ENCODE measurements at regions of chr9 and their contacts with region 1.

Region 1: GRCh38 chr9:32378993-32379729 is 5.3 kb upstream of the ACO1 start:
- DNase-seq: peak; percentile 81
- ATAC-seq: peak; percentile 74
- H3K4me3 ChIP-seq: no peak overlapping the region; the same call in 1 of the 2 replicates
- H3K27ac ChIP-seq: no peak overlapping the region
- H3K4me1 ChIP-seq: 0 out of 2 replicates have a peak, but pooled peaks cover 4% of the 10 kb centered on the region
- H3K27me3 ChIP-seq: no peaks in the 10 kb centered on the region
- CTCF ChIP-seq: peak; percentile 80

Region 2: GRCh38 chr9:32431940-32432555 is 52.9 kb after region 1 on chr9:
- CTCF ChIA-PET with region 1: interaction called, 7 read pairs
- POLR2A ChIA-PET with region 1: no interaction called
- intact Hi-C with region 1: loop called (anchors 1 kb)
- DNase-seq: peak; percentile 36
- ATAC-seq: peak; percentile 82
- H3K4me3 ChIP-seq: no peak overlapping the region
- H3K27ac ChIP-seq: no peak overlapping the region
- H3K4me1 ChIP-seq: peaks cover 25% of the 10 kb centered on the region
- H3K27me3 ChIP-seq: no peaks in the 10 kb centered on the region
- CTCF ChIP-seq: peak; percentile 63

Region 3: DNA sequence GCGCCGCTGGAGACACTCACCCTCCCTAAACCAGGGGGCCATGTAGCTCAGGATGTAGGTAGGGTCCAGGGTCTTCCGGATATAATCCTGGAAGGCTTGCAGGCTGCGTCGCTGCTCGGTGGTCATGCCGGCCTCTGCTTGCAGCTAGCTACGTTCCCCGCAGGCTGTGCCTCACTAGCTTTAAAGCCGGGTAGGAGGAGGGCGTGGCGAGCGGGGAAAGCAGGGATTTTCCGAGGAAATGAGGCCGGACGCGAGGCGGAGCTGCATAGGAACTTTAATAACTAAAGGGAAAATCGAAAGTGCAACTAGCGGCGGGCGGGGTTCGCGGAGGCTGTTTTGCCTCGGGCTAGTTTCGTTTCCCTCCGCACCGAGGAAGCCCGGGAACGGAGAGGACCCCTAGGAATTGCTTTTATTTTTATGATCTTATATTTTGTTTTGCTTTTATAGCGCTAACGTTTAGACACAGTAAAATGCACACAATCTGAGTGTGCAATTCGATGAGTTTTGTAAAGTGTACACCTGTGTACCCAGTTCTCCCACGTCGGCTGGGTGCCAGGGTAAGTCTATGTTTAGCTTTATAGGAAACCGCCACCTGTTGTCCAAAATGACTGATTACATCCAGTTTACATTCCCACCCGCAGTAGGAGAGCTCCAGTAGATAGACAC is 147.0 kb after region 1 on chr9 and contains the start of gene RIGI:
- CTCF ChIA-PET with region 1: interaction called, 16 read pairs
- POLR2A ChIA-PET with region 1: interaction called, 12 read pairs
- intact Hi-C with region 1: loop called (anchors 2 kb)
- DNase-seq: peak; percentile 87
- ATAC-seq: peak; percentile 88
- H3K4me3 ChIP-seq: peak within 1 kb of the TSS; percentile 92
- H3K27ac ChIP-seq: peak within 1 kb of the TSS; percentile 78
- H3K4me1 ChIP-seq: peaks cover 7% of the 10 kb centered on the region; the same call in 1 of the 2 replicates
- H3K27me3 ChIP-seq: no peaks in the 10 kb centered on the region
- CTCF ChIP-seq: peak; percentile 63
- total RNA-seq, gene RIGI: 2.6 and 5.4 TPM in 2 replicates

Region 4: GRCh38 chr9:32571969-32572899 is 193.1 kb after region 1 on chr9:
- CTCF ChIA-PET with region 1: interaction called, 16 read pairs
- POLR2A ChIA-PET with region 1: no interaction called
- intact Hi-C with region 1: loop called (anchors 1 kb)
- DNase-seq: peak; percentile 70
- ATAC-seq: peak; percentile 92
- H3K4me3 ChIP-seq: peak overlapping the region; percentile 97
- H3K27ac ChIP-seq: peak overlapping the region; percentile 55
- H3K4me1 ChIP-seq: peaks cover 17% of the 10 kb centered on the region
- H3K27me3 ChIP-seq: no peaks in the 10 kb centered on the region
- CTCF ChIP-seq: peak; percentile 77

Region 5: GRCh38 chr9:32579706-32580331 is 200.7 kb after region 1 on chr9:
- CTCF ChIA-PET with region 1: interaction called, 22 read pairs
- POLR2A ChIA-PET with region 1: no interaction called
- intact Hi-C with region 1: loop called (anchors 1 kb)
- DNase-seq: peak; percentile 67
- ATAC-seq: no peak
- H3K4me3 ChIP-seq: no peak overlapping the region
- H3K27ac ChIP-seq: no peak overlapping the region
- H3K4me1 ChIP-seq: no peaks in the 10 kb centered on the region; the same call in 1 of the 2 replicates
- H3K27me3 ChIP-seq: no peaks in the 10 kb centered on the region
- CTCF ChIP-seq: peak; percentile 86

Region 6: DNA sequence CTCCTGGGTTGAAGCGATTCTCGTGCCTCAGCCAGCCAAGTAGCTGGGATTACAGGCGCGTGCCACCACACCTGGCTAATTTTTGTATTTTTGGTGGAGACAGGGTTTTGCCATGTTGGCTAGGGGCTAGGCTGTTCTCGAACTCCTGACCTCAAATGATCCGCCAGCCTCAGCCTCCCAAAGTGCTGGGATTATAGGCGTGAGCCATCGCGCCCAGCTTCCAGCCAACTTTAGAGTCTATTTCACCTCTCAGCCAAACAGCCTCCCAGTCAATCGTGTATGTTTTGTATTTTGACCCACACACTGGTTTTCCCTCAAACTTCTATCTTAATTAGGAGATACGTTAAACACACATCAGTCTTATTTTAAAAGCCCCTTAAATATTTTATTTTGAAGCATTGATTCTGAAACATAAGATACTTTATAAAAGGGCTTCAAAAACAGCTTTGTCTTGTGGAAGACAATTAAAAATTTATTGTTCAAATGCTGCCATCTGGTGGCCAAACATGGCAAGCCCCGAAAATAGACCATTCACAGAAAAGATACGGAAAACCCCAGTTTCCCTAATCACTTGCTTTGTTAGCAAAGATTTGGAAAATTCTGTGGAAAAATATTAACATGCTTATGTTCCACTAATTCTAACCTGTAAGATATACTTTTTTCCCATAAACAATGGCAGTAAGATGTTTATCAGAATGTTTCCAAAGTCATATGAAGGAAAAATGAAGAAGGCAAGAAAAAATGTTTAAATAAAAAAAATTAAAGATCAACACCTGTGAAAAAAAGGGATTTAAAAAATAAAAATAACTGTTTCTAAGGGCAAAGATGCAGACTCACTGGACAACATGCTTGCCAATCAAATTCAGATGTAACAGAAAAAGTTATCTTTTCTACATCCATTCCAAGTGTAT is 589.2 kb after region 1 on chr9:
- CTCF ChIA-PET with region 1: interaction called, 3 read pairs
- POLR2A ChIA-PET with region 1: no interaction called
- intact Hi-C with region 1: loop called (anchors 1 kb)
- DNase-seq: peak; percentile 67
- ATAC-seq: no peak
- H3K4me3 ChIP-seq: no peak overlapping the region
- H3K27ac ChIP-seq: no peak overlapping the region
- H3K4me1 ChIP-seq: no peaks in the 10 kb centered on the region
- H3K27me3 ChIP-seq: no peaks in the 10 kb centered on the region
- CTCF ChIP-seq: peak; percentile 79